HEK293 (cell line): ENCODE measurements at regions of chr7 and their contacts with region 1.

Region 1: GRCh38 chr7:42886129-42886528 is 25.7 kb downstream of the C7orf25 start:
- H3K4me3 ChIP-seq: no peak overlapping the region
- H3K27ac ChIP-seq: no peak overlapping the region
- H3K4me1 ChIP-seq: peaks cover 6% of the 10 kb centered on the region; the same call in 1 of the 2 replicates
- CTCF ChIP-seq: no peak

Region 2: GRCh38 chr7:42931834-42932651 is 45.9 kb after region 1 on chr7 and contains the starts of genes MRPL32 and PSMA2:
- CTCF ChIA-PET with region 1: no interaction called
- POLR2A ChIA-PET with region 1: interaction called, 13 read pairs
- H3K4me3 ChIP-seq: peak within 1 kb of the TSS; percentile 94
- H3K27ac ChIP-seq: peak within 1 kb of the TSS; percentile 62; the same call in 1 of the 2 replicates
- H3K4me1 ChIP-seq: no peaks in the 10 kb centered on the region
- CTCF ChIP-seq: no peak